Caki2 (cell line): ENCODE measurements at regions of chr2 and their contacts with region 1.

Region 1: GRCh38 chr2:197356136-197356535 is 45.6 kb upstream of the ANKRD44 start:
- DNase-seq: no peak

Region 2: DNA sequence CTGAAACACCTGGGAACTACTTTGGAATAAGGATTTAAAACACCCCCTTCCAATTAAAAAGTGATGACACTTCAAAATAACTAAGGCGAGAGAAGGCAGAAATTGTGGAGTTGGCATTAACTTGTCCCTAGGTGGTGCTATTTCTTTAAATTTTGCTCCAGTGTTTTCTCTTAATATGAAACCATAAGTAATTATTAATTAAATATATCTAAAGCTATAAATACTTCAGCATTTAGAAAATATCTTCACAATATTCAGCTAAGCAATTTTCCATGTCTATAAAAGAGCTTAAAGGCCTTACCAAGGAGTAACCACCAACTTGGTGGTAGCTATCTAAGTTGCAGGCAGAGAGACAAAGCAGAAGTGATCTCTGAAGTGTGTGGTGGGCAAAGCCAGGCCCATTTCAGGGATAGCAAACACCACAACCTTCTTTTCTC is 242.8 kb before region 1 on chr2:
- in situ Hi-C with region 1: loop called (anchors 25 kb)
- DNase-seq: peak; percentile 50

Region 3: DNA sequence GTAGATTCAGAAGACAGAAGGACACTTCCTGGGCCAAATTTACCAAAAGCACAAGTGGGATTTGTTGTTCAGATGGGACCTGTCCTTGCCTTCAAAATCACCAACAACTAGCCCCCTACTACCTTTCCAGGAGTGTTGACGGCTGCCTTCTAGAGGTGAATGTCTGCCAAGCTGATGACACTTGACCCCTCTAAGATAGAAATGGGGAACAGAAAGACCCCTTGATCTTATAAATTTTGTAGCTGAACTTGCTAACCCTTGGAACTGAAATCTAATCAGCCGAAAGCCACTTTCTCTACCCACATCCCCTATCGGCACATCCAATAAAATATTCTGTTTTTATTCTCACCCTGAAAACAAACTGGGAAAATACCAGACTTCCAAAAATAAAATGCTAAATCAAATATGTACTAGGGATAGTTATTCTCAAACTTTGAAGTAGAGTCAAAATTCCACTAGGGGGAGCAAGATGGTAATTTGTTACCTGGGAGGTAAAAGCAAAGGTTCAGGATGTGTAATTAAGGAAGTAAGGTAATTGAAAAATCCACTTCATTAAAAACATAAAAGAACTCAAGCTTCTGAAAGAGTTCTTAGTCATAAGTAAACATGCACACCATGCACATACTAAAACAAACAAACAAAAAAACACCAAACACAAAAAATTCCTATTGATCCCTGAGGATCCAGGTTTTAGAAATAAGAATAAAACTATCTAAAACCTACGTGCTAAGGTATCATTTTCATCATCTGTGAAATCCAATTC is 164.8 kb before region 1 on chr2:
- in situ Hi-C with region 1: loop called (anchors 10 kb)
- DNase-seq: peak; percentile 49